Ovary (tissue), 10 donors: ENCODE measurements at regions of chr4 and their contacts with region 1.

Region 1: DNA sequence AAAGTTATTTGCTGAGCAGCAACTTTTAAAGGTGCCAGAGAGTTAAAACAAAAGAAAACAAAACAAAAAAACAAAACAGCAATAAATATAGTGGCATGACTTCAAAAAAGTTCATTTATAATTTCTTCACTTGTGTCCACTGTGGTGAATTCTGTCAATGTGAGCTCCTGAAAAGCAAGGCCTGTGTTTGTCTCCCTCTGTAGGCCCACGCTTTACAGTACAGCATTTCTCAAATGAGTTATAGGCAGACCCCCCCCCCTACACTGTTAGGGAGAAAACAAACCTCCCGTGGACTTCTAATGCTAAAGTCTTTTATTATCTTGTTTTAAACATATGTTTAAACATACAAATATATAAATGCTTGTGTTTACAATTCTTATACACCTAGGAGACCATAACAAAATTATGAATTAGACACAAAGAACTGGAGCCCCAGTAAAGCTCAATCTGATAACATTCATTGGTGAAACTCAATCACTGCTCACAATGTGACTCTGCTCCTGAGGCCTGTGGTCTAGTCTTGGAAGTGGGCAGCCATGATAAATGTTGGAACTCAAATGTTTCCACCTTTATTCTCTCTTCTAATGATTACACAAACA is 47.0 kb upstream of the SCOC start:
- DNase-seq: peak in 3 of 5 donors; percentile 19 to 49 (median 25)
- H3K4me3 ChIP-seq: no peak overlapping the region
- H3K27ac ChIP-seq: no peak overlapping the region
- H3K4me1 ChIP-seq: no peaks in the 10 kb centered on the region
- H3K27me3 ChIP-seq: no peaks in the 10 kb centered on the region
- CTCF ChIP-seq: peak; percentile 35 to 70 (median 69)
- EP300 ChIP-seq: no peak
- POLR2A ChIP-seq: no peak

Region 2: DNA sequence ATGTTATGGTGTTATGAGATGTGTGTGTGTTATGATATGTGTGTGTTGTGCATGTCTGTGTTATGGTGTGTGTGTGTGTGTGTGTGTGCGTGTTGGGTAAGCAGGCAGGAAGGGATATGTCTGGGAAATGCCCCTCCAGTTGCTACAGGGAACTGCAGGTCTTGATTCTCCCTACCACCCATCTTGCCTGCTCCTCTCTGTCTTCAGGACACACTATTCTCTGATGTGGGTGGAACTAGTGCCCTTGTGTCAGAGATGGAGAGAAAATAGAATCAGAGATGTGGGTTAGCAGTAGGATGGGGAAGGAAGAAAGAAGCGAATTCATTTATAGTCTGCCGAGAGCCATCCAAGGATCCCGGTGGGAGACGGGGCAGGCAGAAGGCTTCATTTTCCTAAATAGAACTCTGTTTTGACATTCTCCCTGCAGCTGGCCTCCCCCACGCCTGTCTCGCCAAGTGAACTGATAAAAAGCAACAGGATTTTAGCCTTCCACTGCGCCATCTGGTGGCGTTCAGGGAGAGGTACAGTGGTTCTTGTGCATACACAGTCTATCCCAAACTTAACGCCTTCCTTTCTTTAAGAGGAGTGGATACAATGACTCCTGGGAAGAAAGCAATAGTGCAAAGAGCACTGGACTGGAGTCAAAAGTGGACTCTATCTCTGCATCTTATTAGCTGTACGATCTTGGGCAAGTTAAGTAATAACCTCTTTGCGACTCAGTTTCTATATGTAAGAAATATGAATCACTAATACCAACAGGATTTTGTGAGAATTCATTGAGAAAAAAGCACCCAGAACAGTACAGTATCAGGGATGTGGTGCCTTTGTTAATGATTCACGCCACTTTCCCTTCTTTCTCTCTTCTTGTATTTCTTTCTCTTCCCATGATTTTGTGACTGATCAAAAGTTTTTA is 675.0 kb before region 1 on chr4:
- intact Hi-C with region 1: loop called in 1 of 4 experiments (anchors 10 kb)
- DNase-seq: peak; percentile 92 to 94 (median 94)
- H3K4me3 ChIP-seq: no peak overlapping the region
- H3K27ac ChIP-seq: no peak overlapping the region
- H3K4me1 ChIP-seq: peaks cover 3% of the 10 kb centered on the region
- H3K27me3 ChIP-seq: no peaks in the 10 kb centered on the region
- CTCF ChIP-seq: peak; percentile 71 to 89 (median 84)
- EP300 ChIP-seq: no peak
- POLR2A ChIP-seq: no peak

Region 3: DNA sequence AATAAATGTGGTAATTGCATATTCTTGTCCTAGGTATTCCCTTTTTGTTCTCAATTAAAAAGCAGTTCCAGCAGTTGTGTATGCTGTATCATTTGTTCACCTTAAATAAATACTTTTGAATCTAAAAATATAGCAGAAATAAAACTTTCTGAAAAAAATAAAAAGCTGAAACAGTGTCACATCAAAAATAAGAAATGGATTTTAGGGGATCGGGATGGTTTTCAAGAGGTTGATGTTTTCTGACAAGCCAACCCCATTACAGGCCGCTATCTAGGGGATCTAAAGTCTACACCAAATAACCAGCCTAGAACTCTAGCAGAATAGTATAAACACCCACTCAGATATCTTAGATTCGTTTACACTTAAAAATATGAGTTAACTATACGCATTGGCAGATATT is 77.1 kb before region 1 on chr4:
- intact Hi-C with region 1: no loop called
- DNase-seq: no peak
- H3K4me3 ChIP-seq: no peak overlapping the region
- H3K27ac ChIP-seq: no peak overlapping the region
- H3K4me1 ChIP-seq: peaks cover 5% of the 10 kb centered on the region
- H3K27me3 ChIP-seq: no peaks in the 10 kb centered on the region
- CTCF ChIP-seq: no peak
- EP300 ChIP-seq: no peak
- POLR2A ChIP-seq: no peak

Region 4: DNA sequence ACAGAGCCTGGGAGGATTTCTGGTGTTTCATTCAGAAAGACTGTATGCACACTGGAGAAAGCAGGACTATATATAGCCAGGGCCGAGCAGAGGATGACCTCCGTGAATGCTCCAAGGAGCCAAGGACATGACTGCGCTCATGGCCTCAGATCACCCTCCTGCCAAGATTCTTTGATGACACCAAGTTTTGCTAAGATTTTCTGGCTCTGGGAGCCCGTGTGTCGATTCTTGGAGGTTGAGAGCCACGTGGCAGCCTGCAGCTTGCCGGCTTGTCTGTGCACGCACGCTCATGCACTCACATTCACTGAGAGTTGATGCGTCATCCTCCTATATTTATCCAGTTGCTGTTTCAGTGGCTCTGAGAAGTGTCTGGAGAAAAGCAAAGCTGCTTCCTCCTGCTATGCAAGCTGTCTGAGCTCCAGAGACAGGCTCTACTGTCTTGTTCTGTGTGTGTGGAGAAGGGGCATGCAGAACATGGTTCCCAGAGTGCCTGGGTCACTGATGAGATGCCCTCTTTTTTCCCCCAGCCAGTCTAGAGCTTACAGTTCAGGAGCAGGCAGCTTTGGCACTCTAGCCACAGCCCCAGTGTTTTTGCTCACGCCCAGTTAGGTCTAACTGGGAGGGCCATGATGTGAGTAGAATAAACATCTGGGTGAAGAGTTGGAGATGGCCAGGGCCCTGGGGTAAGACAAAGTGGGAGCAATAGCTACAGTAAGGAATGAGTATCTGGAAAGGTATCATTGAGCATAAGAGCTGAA is 17.9 kb before region 1 on chr4:
- intact Hi-C with region 1: no loop called
- DNase-seq: peak; percentile 30 to 57 (median 39)
- H3K4me3 ChIP-seq: no peak overlapping the region
- H3K27ac ChIP-seq: no peak overlapping the region
- H3K4me1 ChIP-seq: peaks cover 3% of the 10 kb centered on the region
- H3K27me3 ChIP-seq: no peaks in the 10 kb centered on the region
- CTCF ChIP-seq: no peak
- EP300 ChIP-seq: no peak
- POLR2A ChIP-seq: no peak